ENCODE measurements at regions of chr16 and their contacts with region 1.

Region 1: GRCh38 chr16:67104061-67104460 is 5.7 kb upstream of the PHAF1 start:
- DNase-seq: no peak
- H3K4me3 ChIP-seq: no peak overlapping the region
- H3K4me3 Mint-ChIP-seq: no peak overlapping the region
- H3K27ac ChIP-seq: no peak overlapping the region
- H3K27ac Mint-ChIP-seq: peak overlapping the region in 3 of 7 donors; percentile 7 to 47 (median 19)
- H3K4me1 ChIP-seq: peaks cover 3% of the 10 kb centered on the region
- H3K4me1 Mint-ChIP-seq: peaks cover 0 to 6% (median 0%) of the 10 kb centered on the region in 4 donors
- H3K27me3 ChIP-seq: no peaks in the 10 kb centered on the region
- H3K27me3 Mint-ChIP-seq: no peaks in the 10 kb centered on the region

Region 2: DNA sequence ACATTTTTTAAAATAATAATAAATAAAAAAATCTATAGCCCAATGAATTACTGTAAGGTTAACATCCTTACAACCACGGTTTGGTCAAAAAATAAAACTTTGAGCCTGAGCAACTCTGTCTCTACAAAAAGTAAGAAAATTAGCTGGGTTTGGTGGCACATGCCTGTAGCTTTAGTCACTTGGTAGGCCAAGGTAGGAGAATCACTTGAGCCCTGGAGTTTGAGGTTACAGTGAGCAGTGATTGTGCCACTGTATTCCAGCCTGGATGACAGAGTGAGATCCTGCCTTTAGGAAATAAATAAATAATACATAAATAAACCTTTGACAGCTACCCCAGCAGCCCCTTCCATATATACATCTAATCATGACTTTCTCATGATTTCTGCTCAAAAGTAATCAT is 21.2 kb before region 1 on chr16:
- CTCF ChIA-PET with region 1: interaction called, 10 read pairs
- POLR2A ChIA-PET with region 1: no interaction called
- intact Hi-C with region 1: no loop called
- DNase-seq: no peak
- H3K4me3 ChIP-seq: no peak overlapping the region
- H3K4me3 Mint-ChIP-seq: no peak overlapping the region
- H3K27ac ChIP-seq: no peak overlapping the region
- H3K27ac Mint-ChIP-seq: no peak overlapping the region
- H3K4me1 ChIP-seq: no peaks in the 10 kb centered on the region
- H3K4me1 Mint-ChIP-seq: peaks cover 9 to 11% (median 10%) of the 10 kb centered on the region in 4 donors
- H3K27me3 ChIP-seq: no peaks in the 10 kb centered on the region
- H3K27me3 Mint-ChIP-seq: no peaks in the 10 kb centered on the region

Region 3: GRCh38 chr16:67248401-67249177 is 144.5 kb after region 1 on chr16 and contains the start of gene SLC9A5:
- CTCF ChIA-PET with region 1: no interaction called
- POLR2A ChIA-PET with region 1: no interaction called
- intact Hi-C with region 1: no loop called
- DNase-seq: peak in 2 of 5 donors; percentile 13 to 28
- H3K4me3 ChIP-seq: peak within 1 kb of the TSS; percentile 71 to 73
- H3K4me3 Mint-ChIP-seq: peak within 1 kb of the TSS; percentile 84 to 95 (median 91)
- H3K27ac ChIP-seq: peak within 1 kb of the TSS; percentile 38
- H3K27ac Mint-ChIP-seq: peak within 1 kb of the TSS; percentile 82 to 100 (median 95)
- H3K4me1 ChIP-seq: peaks cover 47% of the 10 kb centered on the region
- H3K4me1 Mint-ChIP-seq: peaks cover 25 to 53% (median 41%) of the 10 kb centered on the region in 4 donors
- H3K27me3 ChIP-seq: no peaks in the 10 kb centered on the region
- H3K27me3 Mint-ChIP-seq: peaks cover 3% of the 10 kb centered on the region in 2 donors
- total RNA-seq, gene SLC9A5: 1.7 to 2.1 TPM

Region 4: DNA sequence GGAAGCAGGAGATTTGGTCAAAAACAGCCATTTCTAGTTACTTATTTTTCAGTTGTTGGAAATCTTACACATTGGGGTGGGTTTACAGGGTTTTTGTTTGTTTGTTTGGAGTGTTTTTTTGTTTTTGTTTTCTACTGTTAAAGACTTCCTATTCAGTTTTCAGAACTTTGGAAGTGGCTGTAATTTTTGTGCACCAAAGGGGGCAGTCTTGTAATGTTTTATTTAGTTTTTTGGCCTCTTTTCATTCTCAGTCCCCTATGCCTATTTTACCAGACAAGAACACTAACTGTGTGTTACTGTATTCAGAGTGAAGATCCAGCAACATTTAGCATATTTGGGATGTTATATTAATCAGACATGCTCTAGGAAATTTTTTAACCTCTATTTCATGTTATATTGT is 268.6 kb after region 1 on chr16:
- CTCF ChIA-PET with region 1: no interaction called
- POLR2A ChIA-PET with region 1: no interaction called
- intact Hi-C with region 1: no loop called
- DNase-seq: no peak
- H3K4me3 ChIP-seq: no peak overlapping the region
- H3K4me3 Mint-ChIP-seq: no peak overlapping the region
- H3K27ac ChIP-seq: no peak overlapping the region
- H3K27ac Mint-ChIP-seq: no peak overlapping the region
- H3K4me1 ChIP-seq: no peaks in the 10 kb centered on the region
- H3K4me1 Mint-ChIP-seq: no peaks in the 10 kb centered on the region
- H3K27me3 ChIP-seq: peaks cover 3% of the 10 kb centered on the region
- H3K27me3 Mint-ChIP-seq: peaks cover 2 to 10% of the 10 kb centered on the region in 2 donors

Measured in CD4-positive, alpha-beta memory T cell (primary cell).